ENCODE measurements at regions of chr16 and their contacts with region 1.

Region 1: GRCh38 chr16:68022704-68023522 is at the starts of genes DDX28 and DUS2:
- DNase-seq: peak; percentile 83 to 98 (median 92)
- H3K4me3 ChIP-seq: peak within 1 kb of the TSS; percentile 55 to 100 (median 91)
- H3K27ac ChIP-seq: peak within 1 kb of the TSS; percentile 38 to 97 (median 88)
- H3K27me3 ChIP-seq: no peaks in the 10 kb centered on the region
- CTCF ChIP-seq: peak in 33 of 56 donors; percentile 16 to 64 (median 38)
- total RNA-seq, gene DDX28: 3.1 to 10.7 (median 6.9) TPM
- total RNA-seq, gene DUS2: 10.6 to 25.8 (median 17.6) TPM

Region 2: DNA sequence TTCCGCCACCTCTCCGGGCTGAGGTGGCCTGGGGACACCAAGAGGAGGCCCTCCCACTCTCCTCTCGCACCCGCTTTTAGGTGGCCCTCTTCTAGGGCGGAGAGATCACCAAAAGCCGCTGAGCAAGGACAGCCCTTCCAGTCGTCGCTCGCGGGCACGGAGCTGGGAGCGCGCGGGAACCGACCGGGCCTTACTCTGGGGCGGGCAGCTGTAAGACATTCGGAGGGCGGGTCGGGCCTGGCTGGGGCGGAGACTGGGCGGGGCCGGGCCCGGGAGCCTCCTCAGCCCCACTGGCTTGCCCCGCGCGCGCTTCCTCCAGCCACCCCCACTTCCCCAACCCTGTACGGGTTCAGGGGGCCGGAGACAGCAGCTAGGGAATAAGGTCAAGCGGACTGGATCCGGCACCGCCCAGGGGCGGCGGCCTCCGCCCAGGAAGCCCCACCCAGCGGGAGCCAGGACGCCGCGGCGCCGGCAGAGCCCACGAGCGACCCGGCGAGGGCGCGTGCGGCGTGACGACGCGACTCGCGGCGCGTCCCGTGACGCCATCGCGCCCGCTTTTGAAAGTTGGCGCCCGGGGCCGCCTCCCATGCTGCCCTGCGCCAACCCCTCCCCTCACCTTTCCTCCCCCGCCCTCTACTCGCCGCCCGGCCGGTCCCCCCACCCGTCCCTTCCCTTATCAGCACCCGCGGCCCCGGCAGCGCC is 460.9 kb before region 1 on chr16:
- intact Hi-C with region 1: loop called in 1 of 2 experiments (anchors 10 kb)
- DNase-seq: peak; percentile 79 to 93 (median 88)
- H3K4me3 ChIP-seq: peak overlapping the region; percentile 40 to 100 (median 92)
- H3K27ac ChIP-seq: peak overlapping the region; percentile 31 to 100 (median 99)
- H3K27me3 ChIP-seq: no peaks in the 10 kb centered on the region
- CTCF ChIP-seq: peak in 21 of 56 donors; percentile 6 to 46 (median 23)

Region 3: GRCh38 chr16:67833418-67834241 is 189.3 kb before region 1 on chr16:
- intact Hi-C with region 1: loop called in 1 of 2 experiments (anchors 10 kb)
- DNase-seq: peak; percentile 90 to 96 (median 94)
- H3K4me3 ChIP-seq: peak overlapping the region; percentile 50 to 100 (median 84)
- H3K27ac ChIP-seq: peak overlapping the region; percentile 10 to 94 (median 81)
- H3K27me3 ChIP-seq: no peaks in the 10 kb centered on the region
- CTCF ChIP-seq: peak in 35 of 56 donors; percentile 14 to 62 (median 33)

Region 4: GRCh38 chr16:67872786-67873537 is 150.0 kb before region 1 on chr16 and contains the start of gene EDC4:
- intact Hi-C with region 1: loop called (anchors 10 kb)
- DNase-seq: peak; percentile 59 to 88 (median 76)
- H3K4me3 ChIP-seq: peak within 1 kb of the TSS; percentile 67 to 100 (median 93)
- H3K27ac ChIP-seq: peak within 1 kb of the TSS in 58 of 59 donors; percentile 11 to 93 (median 81)
- H3K27me3 ChIP-seq: no peaks in the 10 kb centered on the region
- CTCF ChIP-seq: peak in 33 of 56 donors; percentile 9 to 56 (median 26)
- total RNA-seq, gene EDC4: 46.0 to 96.6 (median 69.2) TPM

Region 5: DNA sequence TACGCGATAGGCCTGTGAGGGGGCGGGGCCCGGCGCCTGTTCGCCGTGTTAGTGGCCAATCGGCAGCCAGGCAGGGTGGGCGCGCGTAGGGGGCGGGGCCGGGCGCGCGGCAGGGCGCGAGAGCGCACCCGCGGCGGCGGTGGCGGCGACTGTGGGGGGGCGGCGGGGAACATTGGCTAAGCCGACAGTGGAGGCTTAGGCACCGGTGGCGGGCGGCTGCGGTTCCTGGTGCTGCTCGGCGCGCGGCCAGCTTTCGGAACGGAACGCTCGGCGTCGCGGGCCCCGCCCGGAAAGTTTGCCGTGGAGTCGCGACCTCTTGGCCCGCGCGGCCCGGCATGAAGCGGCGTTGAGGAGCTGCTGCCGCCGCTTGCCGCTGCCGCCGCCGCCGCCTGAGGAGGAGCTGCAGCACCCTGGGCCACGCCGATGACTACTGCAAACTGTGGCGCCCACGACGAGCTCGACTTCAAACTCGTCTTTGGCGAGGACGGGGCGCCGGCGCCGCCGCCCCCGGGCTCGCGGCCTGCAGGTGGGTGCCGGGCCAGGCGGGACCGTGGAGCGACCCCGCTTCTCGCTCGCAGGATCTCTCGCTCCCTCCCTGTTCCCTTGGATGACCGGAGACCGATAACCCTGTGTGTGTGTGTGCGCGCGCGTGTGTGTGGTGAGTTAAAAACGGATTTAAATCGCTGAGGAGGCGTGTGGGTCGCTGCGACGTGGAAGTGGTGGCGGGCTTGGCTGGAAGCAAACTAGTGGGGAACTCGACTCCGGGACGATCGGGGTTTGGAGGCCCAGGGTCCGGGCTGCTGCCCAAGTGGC is 62.6 kb after region 1 on chr16 and contains the start of gene NFATC3:
- intact Hi-C with region 1: loop called in 1 of 2 experiments (anchors 5 kb)
- DNase-seq: peak; percentile 95 to 99 (median 98)
- H3K4me3 ChIP-seq: peak within 1 kb of the TSS; percentile 71 to 97 (median 85)
- H3K27ac ChIP-seq: peak within 1 kb of the TSS; percentile 91 to 100 (median 99)
- H3K27me3 ChIP-seq: no peaks in the 10 kb centered on the region
- CTCF ChIP-seq: peak in 23 of 56 donors; percentile 6 to 39 (median 23)
- total RNA-seq, gene NFATC3: 30.0 to 60.4 (median 40.8) TPM